IMR-90 (cell line): ENCODE measurements at regions of chr1 and their contacts with region 1.

Region 1: DNA sequence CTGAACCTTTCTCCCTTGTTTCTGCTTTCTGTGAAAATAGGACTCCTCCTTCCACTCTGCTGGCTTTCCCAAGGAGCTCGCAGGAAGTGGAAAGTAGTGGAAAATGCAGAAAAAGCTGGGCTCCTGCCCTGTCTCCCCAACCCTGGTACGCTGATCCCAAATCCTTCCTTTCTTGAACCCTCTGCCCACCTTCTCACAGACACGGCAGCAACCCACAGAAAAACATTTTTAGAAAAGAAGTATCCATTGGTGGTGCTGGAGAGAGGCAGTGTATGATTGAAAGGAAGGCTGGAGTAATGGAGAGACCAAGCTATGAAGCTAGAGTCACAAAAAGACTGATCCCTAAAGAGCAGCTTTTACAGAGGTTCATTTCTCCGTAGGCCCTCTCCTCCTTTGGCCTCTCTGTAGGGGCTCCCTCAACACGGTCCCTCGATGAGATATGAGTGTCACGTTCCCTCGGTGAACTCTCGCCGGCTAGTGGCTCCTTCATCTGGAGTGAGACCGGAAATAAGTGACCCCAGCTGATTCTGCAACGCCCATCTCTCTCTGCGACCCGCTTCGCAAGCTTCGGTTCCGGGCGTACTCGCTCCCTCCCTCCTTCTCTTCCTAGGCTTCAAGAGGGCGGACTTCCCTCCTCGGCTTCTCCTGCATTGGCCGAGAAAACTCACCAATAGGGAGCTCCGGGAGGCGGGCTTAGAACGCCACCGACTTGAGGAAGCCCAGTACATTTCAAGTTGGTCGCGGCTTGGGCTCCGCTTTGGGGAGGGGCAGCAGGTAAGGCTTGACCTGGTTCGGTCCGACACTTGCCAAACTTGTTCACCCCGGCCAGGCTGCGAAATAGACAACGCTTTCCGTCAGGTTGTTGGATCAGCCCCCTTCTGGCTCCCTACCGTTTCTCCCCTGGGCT is at the starts of genes ANKRD34A and POLR3GL:
- DNase-seq: peak; percentile 89
- ATAC-seq: peak; percentile 86
- H3K4me3 ChIP-seq: peak within 1 kb of the TSS; percentile 61
- H3K27ac ChIP-seq: peak within 1 kb of the TSS; percentile 76
- H3K4me1 ChIP-seq: peaks cover 28% of the 10 kb centered on the region
- H3K27me3 ChIP-seq: no peaks in the 10 kb centered on the region
- CTCF ChIP-seq: no peak
- POLR2A ChIP-seq: no peak; the same call in 1 of the 2 replicates
- RAD21 ChIP-seq: no peak
- total RNA-seq, gene ANKRD34A: 0.56 and 0.90 TPM in 2 replicates
- total RNA-seq, gene POLR3GL: 7.9 and 10.3 TPM in 2 replicates

Region 2: DNA sequence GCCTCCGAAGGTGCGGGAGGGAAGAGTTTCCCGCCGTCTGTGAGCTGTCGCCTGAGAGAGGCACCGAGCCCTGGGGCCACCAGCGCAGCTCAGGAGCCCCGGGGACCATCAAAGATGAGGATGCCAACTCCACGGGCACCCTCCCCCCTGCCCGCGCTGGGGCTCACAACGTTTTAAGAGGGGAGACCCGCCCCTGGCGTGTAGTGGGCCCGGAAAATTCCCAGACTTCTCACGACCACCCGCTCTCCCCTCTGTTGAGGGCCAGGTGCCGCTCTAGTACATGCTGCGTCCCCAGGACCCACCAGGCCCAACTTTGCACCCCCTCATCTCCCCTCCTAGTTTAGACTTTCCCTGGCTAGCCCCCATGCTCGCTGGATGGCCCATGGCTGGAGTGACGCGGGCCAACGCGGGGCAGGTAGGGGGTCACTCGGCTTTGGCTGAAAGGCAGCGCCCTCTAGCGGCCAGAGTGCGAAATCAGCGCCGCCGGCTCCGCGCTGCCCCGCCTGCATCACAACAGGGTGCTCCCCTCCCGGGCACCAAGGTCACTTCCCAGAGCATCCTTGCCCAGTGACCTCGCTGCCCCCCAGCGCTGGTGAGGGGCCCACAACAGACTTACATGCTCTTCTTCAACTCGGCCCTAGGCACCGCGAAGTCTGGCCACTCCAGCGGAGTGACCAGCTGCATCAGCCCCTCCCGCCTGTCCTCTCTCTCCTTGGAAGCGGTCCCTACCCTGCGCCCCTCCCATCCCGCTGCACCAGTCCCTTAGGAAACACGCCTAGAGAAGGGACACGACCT is 243.2 kb before region 1 on chr1:
- CTCF ChIA-PET with region 1: no interaction called
- POLR2A ChIA-PET with region 1: no interaction called
- dilution Hi-C with region 1: no loop called
- in situ Hi-C with region 1: no loop called
- intact Hi-C with region 1: no loop called
- DNase-seq: peak; percentile 59
- ATAC-seq: peak; percentile 88
- H3K4me3 ChIP-seq: peak overlapping the region; percentile 23; the same call in 1 of the 2 replicates
- H3K27ac ChIP-seq: peak overlapping the region; percentile 62
- H3K4me1 ChIP-seq: peaks cover 27% of the 10 kb centered on the region
- H3K27me3 ChIP-seq: no peaks in the 10 kb centered on the region
- CTCF ChIP-seq: peak; percentile 83
- POLR2A ChIP-seq: peak; percentile 38
- RAD21 ChIP-seq: peak; percentile 81

Region 3: DNA sequence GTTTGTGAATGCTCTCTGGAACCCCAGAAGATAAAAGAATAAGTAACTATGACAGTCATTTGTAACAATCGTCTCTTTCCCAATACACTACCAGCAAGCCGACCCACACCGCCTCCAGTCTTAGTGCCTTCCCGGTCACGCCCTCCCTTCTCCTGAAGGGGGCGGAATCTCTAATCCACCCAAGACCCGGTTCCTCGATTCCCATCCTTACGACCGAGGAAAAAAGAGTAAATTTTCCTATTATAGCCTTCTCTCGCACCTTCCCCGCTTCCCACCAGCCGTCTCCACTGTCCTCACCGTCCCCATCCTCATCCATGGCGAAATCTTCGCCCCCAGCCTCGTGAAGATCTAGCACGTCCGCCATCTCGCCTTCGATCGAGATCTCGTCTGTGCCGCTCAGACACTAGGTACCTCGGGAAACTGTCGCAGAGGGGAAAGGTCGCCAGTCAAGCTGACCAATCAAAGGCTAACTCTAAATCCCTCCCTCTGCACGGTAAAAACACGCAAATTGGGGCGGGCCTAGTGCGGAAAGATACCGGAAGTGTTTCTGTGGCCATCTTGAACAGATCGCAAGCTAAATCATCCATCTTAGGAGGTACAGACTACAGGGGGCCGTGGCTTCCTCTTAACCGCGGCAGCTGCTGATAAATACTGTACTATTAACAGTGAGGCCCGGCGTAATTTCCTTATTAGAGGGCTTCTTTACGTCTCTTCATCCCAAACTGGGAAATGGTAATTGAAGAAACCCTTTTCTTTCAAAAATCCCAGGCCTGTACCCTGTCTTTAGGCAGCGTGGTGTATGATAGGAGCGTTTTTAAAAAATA is 37.0 kb before region 1 on chr1 and contains the start of gene RBM8A:
- CTCF ChIA-PET with region 1: interaction called, 3 read pairs
- POLR2A ChIA-PET with region 1: interaction called, 4 read pairs
- dilution Hi-C with region 1: no loop called
- in situ Hi-C with region 1: no loop called
- intact Hi-C with region 1: loop called (anchors 2 kb)
- DNase-seq: peak; percentile 99
- ATAC-seq: peak; percentile 100
- H3K4me3 ChIP-seq: peak within 1 kb of the TSS; percentile 76
- H3K27ac ChIP-seq: peak within 1 kb of the TSS; percentile 87
- H3K4me1 ChIP-seq: peaks cover 3% of the 10 kb centered on the region
- H3K27me3 ChIP-seq: no peaks in the 10 kb centered on the region
- CTCF ChIP-seq: peak; percentile 62
- POLR2A ChIP-seq: peak; percentile 97
- RAD21 ChIP-seq: no peak
- total RNA-seq, gene RBM8A: 94.1 and 228 TPM in 2 replicates